ENCODE measurements at regions of chr17 and their contacts with region 1.

Region 1: DNA sequence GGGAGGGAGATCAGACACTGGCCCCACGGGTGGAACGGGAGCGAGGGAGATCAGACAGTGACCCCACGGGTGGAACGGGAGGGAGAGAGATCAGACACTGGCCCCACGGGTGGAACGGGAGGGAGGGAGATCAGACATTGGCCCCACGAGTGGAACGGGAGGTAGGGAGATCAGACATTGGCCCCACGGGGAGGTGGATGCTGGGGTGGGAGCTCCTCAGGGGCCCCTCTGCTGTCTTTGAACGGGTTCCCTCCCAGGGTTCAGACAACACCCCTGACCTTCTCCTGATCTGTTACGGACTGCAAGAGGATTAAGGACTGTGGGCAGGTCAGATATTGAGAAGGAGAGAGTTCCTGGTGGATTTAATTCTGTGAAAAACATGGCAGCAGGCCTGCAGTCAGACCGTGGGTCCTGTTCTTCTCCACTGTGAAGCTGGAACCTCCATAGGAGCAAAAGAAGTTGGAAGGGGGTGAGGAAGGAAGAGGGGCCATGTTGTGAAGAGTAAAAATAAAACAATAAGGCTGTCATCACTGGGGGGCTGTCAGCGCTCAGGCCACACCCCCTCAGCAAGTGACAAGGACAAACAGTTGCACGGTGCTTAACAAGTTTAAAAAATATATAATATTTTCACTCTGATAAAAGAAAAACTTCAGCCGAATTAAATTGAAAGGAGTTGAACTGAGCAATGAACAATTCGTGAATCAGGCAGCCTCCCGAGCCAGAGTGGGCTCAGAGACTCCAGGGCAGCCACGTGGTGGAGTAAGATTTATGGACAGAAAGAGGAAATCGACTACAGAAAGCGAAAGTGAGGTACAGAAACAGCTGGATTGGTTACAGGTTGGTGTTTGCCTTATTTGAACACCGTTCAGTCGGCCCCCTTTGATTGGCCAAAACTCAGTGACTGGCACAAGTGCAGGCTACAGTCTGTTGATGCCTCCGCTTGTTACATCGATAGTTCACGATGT is 348.7 kb upstream of the TNRC6C start:
- DNase-seq: no peak
- ATAC-seq: no peak
- H3K4me3 ChIP-seq: peak overlapping the region in 2 of 12 donors; percentile 1 to 37
- H3K27ac ChIP-seq: peak overlapping the region in 3 of 12 donors; percentile 9 to 34 (median 32)
- H3K4me1 ChIP-seq: peaks cover 0 to 15% (median 3%) of the 10 kb centered on the region in 12 donors
- H3K27me3 ChIP-seq: no peaks in the 10 kb centered on the region
- CTCF ChIP-seq: no peak
- POLR2A ChIP-seq: no peak

Region 2: GRCh38 chr17:77681861-77682260 is 72.0 kb after region 1 on chr17:
- intact Hi-C with region 1: loop called in 1 of 10 experiments (anchors 10 kb)
- DNase-seq: peak; percentile 46 to 90 (median 78)
- ATAC-seq: peak; percentile 73 to 81 (median 77)
- H3K4me3 ChIP-seq: no peak overlapping the region
- H3K27ac ChIP-seq: peak overlapping the region in 7 of 12 donors; percentile 0 to 55 (median 29)
- H3K4me1 ChIP-seq: peaks cover 0 to 36% (median 5%) of the 10 kb centered on the region in 12 donors
- H3K27me3 ChIP-seq: no peaks in the 10 kb centered on the region
- CTCF ChIP-seq: no peak
- POLR2A ChIP-seq: no peak

Region 3: DNA sequence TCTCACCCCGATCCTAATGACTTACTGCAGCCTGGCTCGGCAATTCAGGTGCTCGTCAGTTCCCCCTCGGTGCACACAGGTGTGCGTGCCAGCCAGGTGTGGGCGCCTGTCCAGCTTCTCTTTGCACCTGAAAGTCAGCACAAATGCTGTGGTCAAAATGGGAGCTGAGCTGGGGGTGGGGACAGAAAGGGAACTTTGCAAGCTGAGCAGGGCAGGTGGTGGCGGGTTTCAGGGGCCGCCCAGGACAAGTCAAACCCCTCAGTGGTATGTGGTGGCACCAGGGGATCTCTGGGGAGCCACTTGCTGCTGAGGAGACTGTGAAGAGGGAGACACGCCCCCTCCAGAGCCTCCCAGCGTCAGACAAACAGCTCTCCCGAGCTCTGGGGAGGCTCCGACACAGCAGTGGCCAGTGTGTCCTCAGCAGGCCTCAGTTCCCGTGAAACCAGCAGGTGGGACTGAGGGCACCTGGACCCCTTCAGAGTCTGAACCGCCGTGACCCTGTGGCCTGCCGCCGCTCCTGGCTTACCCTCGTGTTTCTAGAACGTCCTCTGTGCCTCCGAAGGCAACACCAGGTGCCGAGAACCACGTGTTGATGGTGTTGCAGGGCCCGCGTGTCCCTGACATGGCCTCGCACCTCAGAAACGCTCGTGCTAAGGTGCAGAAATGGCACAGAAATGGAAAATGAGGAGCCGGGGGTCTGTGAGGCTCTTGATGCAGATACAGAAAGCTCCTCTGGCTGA is 115.2 kb after region 1 on chr17:
- intact Hi-C with region 1: loop called in 1 of 10 experiments (anchors 10 kb)
- DNase-seq: no peak
- ATAC-seq: no peak
- H3K4me3 ChIP-seq: no peak overlapping the region
- H3K27ac ChIP-seq: no peak overlapping the region
- H3K4me1 ChIP-seq: peaks cover 0 to 27% (median 8%) of the 10 kb centered on the region in 12 donors
- H3K27me3 ChIP-seq: no peaks in the 10 kb centered on the region
- CTCF ChIP-seq: no peak
- POLR2A ChIP-seq: no peak